MCF 10A (cell line): ENCODE measurements at regions of chr9 and their contacts with region 1.

Region 1: DNA sequence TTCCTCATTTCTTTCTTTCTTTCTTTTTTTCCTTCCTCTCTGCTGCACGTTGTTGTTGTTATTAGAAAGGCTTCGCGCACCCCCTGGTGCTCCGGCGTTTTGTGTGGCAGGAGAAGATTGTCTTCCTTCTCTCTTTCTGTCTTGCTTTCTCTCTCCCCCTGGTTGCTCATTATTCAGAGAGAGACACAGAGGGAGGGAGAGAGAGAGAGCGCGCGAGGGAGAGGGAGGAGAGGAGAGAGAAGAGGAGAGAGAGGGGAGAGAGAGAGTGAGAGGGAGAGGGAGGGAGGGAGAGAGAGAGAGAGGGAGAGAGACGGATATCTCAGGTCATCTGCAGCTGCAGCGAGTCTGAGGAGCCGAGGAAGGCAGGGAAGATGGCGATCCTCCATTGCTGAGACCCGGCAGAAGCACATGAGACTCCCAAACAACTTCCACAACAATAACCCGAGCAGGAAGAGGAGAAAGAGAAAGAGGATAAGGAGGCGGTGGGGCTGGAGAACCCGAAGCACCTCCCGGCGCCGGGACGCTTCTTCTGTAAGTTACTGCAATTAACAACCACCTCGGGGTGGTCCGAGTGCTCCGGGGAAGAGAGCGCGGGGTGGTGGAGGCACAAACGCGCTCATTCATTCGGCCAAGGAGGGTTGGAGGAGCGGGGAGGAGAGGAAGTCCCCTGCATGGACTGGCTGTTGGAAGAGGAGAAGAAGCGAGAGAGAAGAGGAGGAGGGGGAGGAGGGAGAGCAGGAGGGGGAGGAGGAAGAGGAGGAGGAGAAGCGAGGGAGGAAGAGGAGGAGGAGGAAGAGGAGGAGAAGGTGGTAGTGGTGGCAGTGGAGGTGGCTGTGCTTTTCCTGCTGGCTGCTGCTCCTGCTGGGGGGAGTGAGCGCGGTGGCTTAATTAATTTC is at the start of gene ZNF462:
- DNase-seq: peak; percentile 73
- H3K4me3 Mint-ChIP-seq: peak within 1 kb of the TSS; percentile 84
- H3K27ac Mint-ChIP-seq: peak within 1 kb of the TSS; percentile 53
- H3K4me1 Mint-ChIP-seq: peaks cover 23% of the 10 kb centered on the region
- H3K27me3 Mint-ChIP-seq: no peaks in the 10 kb centered on the region
- CTCF ChIP-seq: peak; percentile 24
- total RNA-seq, gene ZNF462: 45.7 and 47.2 TPM in 2 replicates

Region 2: GRCh38 chr9:106284296-106284695 is 578.8 kb before region 1 on chr9:
- CTCF ChIA-PET with region 1: no interaction called
- POLR2A ChIA-PET with region 1: no interaction called
- intact Hi-C with region 1: loop called (anchors 2 kb)
- DNase-seq: peak; percentile 4
- H3K4me3 Mint-ChIP-seq: no peak overlapping the region
- H3K27ac Mint-ChIP-seq: no peak overlapping the region
- H3K4me1 Mint-ChIP-seq: no peaks in the 10 kb centered on the region
- H3K27me3 Mint-ChIP-seq: no peaks in the 10 kb centered on the region
- CTCF ChIP-seq: no peak

Region 3: DNA sequence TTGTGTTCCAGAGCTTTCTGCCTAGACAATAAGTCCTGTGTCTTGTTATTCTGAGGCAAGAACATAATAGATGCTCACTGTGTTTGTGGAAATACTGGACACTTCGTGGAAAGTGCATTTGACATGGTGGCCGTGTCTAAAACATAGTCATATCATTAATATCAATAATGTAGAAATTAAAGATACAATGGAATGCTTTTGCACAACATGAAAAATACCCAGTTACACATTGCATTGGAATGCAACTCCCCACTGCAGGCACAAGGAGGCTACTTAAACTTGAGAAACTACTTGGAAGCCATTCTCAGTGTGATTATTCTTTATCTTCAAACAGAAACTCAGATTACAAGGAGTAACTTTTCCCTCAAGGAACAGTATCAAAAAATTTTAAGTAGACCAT is 145.4 kb before region 1 on chr9:
- CTCF ChIA-PET with region 1: interaction called, 3 read pairs
- POLR2A ChIA-PET with region 1: interaction called, 7 read pairs
- intact Hi-C with region 1: loop called (anchors 1 kb)
- DNase-seq: peak; percentile 67
- H3K4me3 Mint-ChIP-seq: peak overlapping the region; percentile 5
- H3K27ac Mint-ChIP-seq: peak overlapping the region; percentile 52
- H3K4me1 Mint-ChIP-seq: peaks cover 20% of the 10 kb centered on the region
- H3K27me3 Mint-ChIP-seq: no peaks in the 10 kb centered on the region
- CTCF ChIP-seq: peak; percentile 11

Region 4: GRCh38 chr9:106892632-106893031 is 29.6 kb after region 1 on chr9:
- CTCF ChIA-PET with region 1: interaction called, 121 read pairs
- POLR2A ChIA-PET with region 1: interaction called, 710 read pairs
- intact Hi-C with region 1: loop called (anchors 1 kb)
- DNase-seq: peak; percentile 97
- H3K4me3 Mint-ChIP-seq: peak overlapping the region; percentile 53
- H3K27ac Mint-ChIP-seq: peak overlapping the region; percentile 77
- H3K4me1 Mint-ChIP-seq: peaks cover 60% of the 10 kb centered on the region
- H3K27me3 Mint-ChIP-seq: no peaks in the 10 kb centered on the region
- CTCF ChIP-seq: no peak

Region 5: DNA sequence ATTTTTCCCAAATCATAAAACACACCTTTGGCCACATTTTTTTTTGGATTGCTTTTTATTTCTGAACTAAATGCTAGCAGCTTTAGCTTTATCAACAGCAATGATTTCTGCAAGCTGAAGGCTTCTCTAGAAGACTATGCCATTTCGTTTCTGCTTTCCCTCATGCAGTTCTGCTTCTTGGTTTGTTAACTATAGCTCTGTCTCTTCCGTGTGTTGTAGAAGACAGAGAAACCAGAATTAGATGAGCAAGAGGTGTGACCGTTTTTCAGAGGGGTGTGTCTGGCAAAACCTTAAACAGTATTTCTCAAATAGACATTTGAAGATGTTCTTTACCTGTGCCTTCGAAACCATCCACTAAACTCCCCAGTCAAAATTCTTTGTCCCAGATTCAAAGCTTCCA is 131.4 kb after region 1 on chr9:
- CTCF ChIA-PET with region 1: no interaction called
- POLR2A ChIA-PET with region 1: no interaction called
- intact Hi-C with region 1: no loop called
- DNase-seq: no peak
- H3K4me3 Mint-ChIP-seq: no peak overlapping the region
- H3K27ac Mint-ChIP-seq: no peak overlapping the region
- H3K4me1 Mint-ChIP-seq: no peaks in the 10 kb centered on the region
- H3K27me3 Mint-ChIP-seq: no peaks in the 10 kb centered on the region
- CTCF ChIP-seq: no peak

Region 6: DNA sequence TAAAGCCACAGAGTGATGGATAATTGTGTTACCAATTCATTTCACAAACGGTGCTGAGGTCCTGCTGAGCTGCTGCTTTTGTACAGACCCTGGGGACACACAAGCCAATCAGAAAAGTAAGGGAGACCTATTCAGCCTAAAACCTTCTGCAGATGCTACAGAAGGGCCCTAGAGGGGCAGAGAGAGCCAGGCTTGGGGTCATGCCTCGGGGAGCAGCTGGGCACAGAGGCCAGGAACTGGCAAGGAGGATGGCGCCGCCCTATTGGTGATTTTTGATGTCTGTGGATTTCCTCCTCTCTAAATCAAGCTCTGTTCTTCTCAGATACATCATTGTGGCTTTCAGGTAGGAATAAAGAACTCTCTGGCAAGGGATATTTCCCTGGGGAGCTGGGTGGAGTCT is 181.8 kb after region 1 on chr9:
- CTCF ChIA-PET with region 1: interaction called, 5 read pairs
- POLR2A ChIA-PET with region 1: no interaction called
- intact Hi-C with region 1: loop called (anchors 10 kb)
- DNase-seq: no peak
- H3K4me3 Mint-ChIP-seq: no peak overlapping the region
- H3K27ac Mint-ChIP-seq: no peak overlapping the region
- H3K4me1 Mint-ChIP-seq: peaks cover 5% of the 10 kb centered on the region
- H3K27me3 Mint-ChIP-seq: no peaks in the 10 kb centered on the region
- CTCF ChIP-seq: peak; percentile 25

Region 7: DNA sequence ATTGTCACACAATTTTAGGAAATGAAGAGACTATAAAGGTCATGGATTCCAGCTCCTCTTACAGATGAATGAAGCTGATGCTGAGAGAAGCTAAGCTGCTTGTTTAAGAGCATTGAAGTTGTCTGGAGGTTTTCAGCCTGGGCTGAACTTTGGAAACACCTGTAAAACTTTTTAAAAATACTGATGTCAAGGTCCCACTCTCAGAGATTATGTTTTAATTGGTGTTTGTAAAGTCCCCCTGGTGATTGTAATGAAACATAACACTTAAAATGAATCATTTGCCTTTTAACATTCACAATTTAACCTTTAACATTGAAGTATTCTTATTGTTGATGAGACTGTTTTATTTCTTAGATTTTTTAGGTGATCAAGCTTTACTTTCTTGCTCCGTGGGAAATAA is 436.4 kb after region 1 on chr9:
- CTCF ChIA-PET with region 1: no interaction called
- POLR2A ChIA-PET with region 1: no interaction called
- intact Hi-C with region 1: loop called (anchors 10 kb)
- DNase-seq: no peak
- H3K4me3 Mint-ChIP-seq: no peak overlapping the region
- H3K27ac Mint-ChIP-seq: no peak overlapping the region
- H3K4me1 Mint-ChIP-seq: peaks cover 18% of the 10 kb centered on the region
- H3K27me3 Mint-ChIP-seq: no peaks in the 10 kb centered on the region
- CTCF ChIP-seq: peak; percentile 23